ENCODE measurements at regions of chr13 and their contacts with region 1.

Region 1: DNA sequence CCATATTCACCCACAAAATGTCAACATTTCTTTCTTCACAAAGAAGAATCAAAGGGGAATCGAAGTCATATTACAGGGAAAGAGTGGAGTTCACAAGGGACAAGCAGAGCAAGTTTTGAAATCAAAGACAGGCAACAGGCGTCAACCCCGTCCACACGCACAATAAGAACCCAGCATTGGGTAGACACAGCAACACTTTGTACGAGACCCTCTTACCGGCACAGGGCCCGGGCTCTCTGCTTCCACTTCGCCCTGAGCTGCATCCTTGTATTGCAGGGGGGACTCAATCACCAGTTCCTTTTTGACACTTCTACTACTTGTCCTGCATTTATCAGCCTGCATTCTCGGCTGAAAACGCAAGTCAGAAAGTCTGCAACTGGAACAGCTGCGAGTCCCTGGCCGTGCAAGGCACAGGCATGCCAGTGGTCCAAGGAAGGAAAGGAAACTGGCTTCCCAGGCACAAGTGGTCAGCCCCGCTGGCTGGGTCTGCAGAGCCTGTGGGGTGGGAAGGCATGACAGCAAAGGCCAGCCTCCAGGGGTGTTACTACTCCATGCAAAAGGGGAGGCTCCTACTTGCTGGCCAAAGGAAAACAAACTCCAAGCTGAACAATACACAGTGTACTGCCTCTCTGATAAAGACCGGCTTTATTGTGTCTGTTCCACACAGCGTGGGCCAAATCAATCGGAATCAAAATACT is at the start of gene DOCK9:
- DNase-seq: peak; percentile 74 to 81 (median 78)
- ATAC-seq: peak; percentile 93 to 98 (median 96)
- H3K4me3 ChIP-seq: peak within 1 kb of the TSS; percentile 18 to 76 (median 57)
- H3K27ac ChIP-seq: peak within 1 kb of the TSS; percentile 50 to 84 (median 74)
- H3K4me1 ChIP-seq: peaks cover 0 to 71% (median 27%) of the 10 kb centered on the region in 12 donors
- H3K27me3 ChIP-seq: peaks cover 0 to 13% (median 0%) of the 10 kb centered on the region in 9 donors
- CTCF ChIP-seq: no peak
- POLR2A ChIP-seq: peak in 1 of 2 donors; percentile 84
- total RNA-seq, gene DOCK9: 35.0 to 128 (median 45.2) TPM

Region 2: DNA sequence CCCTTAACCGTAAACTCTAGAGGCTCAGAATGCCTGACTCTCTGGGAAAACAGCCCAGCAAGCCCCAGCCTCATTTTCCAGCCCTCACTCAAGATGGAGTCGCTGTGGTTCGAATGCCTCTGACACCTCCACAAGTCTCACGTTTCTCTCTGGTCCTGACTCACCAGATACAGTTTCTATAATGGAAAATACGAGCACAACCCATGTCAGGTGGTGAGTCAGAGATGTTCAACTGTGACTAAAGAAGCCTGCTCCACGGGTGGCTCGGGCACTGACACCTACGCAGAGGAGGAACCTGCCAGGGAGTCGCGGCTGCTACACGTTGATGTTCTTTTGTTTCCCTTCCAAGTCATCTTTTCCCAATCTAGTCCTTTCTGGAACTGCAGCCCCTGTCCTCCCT is 313.7 kb before region 1 on chr13:
- intact Hi-C with region 1: no loop called
- DNase-seq: no peak
- ATAC-seq: no peak
- H3K4me3 ChIP-seq: no peak overlapping the region
- H3K27ac ChIP-seq: no peak overlapping the region
- H3K4me1 ChIP-seq: no peaks in the 10 kb centered on the region
- H3K27me3 ChIP-seq: no peaks in the 10 kb centered on the region
- CTCF ChIP-seq: no peak
- POLR2A ChIP-seq: no peak

Region 3: DNA sequence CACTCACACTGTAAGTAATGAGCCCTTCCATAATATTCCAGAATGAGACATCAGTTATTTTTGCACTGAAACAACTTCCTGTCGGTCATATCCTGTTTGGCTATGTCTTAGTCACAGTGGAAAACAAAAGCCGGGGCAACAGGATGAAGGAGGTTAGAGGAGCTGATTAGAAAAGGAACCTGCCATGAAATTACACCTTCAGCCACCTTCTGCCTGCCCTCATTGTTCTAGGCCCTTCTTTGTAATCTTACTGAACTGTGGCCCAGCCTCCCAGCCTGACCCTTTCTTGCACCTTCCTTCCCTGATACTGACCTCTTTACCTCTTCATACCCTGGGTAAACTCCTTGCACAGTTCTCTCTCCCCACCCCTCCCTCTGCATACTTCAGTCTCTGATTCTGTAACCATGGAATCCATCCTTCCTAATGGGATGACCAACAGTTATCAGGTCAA is 67.2 kb before region 1 on chr13:
- intact Hi-C with region 1: loop called in 4 of 10 experiments (anchors 5 to 10 kb)
- DNase-seq: peak in 3 of 5 donors; percentile 44 to 58 (median 53)
- ATAC-seq: peak; percentile 81 to 94 (median 84)
- H3K4me3 ChIP-seq: no peak overlapping the region
- H3K27ac ChIP-seq: peak overlapping the region; percentile 18 to 90 (median 66)
- H3K4me1 ChIP-seq: peaks cover 2 to 50% (median 27%) of the 10 kb centered on the region in 12 donors
- H3K27me3 ChIP-seq: no peaks in the 10 kb centered on the region
- CTCF ChIP-seq: no peak
- POLR2A ChIP-seq: no peak

Region 4: GRCh38 chr13:98918771-98919170 is 58.9 kb before region 1 on chr13:
- intact Hi-C with region 1: loop called in 5 of 10 experiments (anchors 5 to 10 kb)
- DNase-seq: no peak
- ATAC-seq: peak in 1 of 4 donors; percentile 59
- H3K4me3 ChIP-seq: no peak overlapping the region
- H3K27ac ChIP-seq: peak overlapping the region in 3 of 12 donors; percentile 12 to 34 (median 29)
- H3K4me1 ChIP-seq: peaks cover 0 to 73% (median 38%) of the 10 kb centered on the region in 12 donors
- H3K27me3 ChIP-seq: no peaks in the 10 kb centered on the region
- CTCF ChIP-seq: no peak
- POLR2A ChIP-seq: no peak

Region 5: GRCh38 chr13:98927951-98928927 is 49.5 kb before region 1 on chr13:
- intact Hi-C with region 1: loop called in 1 of 10 experiments (anchors 5 kb)
- DNase-seq: peak in 2 of 5 donors; percentile 60 to 68
- ATAC-seq: peak; percentile 84 to 95 (median 94)
- H3K4me3 ChIP-seq: no peak overlapping the region
- H3K27ac ChIP-seq: peak overlapping the region; percentile 14 to 81 (median 64)
- H3K4me1 ChIP-seq: peaks cover 0 to 51% (median 31%) of the 10 kb centered on the region in 12 donors
- H3K27me3 ChIP-seq: no peaks in the 10 kb centered on the region
- CTCF ChIP-seq: no peak
- POLR2A ChIP-seq: no peak

Region 6: DNA sequence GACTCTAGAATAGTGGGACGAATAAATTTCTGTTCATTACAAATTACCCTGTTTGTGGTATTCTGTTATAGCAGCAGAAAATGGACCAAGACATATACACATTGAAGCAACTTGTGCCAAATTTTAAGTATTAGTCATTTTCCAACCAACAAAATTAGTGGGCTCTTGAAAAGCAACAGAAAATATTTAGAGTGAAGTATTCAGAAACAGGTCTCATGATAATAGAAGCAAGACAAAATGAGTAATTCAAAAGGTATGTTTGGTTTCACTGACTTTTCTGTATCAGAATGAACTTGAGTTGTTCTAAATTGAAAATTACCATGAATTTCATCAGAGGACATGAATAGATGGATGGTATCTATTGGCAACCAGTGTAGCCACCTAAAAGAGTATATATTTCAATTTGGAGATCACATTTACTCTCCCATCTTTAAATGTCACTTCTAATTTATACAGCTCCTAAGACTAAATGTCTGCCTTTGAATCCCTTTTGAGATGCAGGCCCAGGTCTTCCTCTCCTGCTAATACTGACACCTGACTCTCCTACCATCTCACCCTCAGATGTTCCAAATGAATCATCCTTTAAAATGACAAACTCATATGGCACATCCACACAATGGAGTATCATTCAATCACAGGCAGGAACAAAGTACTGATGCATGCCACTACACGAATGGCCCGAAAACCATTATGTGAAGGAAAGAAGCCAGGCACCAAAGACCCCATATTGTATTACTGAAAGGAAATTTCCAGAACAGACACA is 40.9 kb after region 1 on chr13:
- intact Hi-C with region 1: no loop called
- DNase-seq: no peak
- ATAC-seq: no peak
- H3K4me3 ChIP-seq: no peak overlapping the region
- H3K27ac ChIP-seq: no peak overlapping the region
- H3K4me1 ChIP-seq: peaks cover 0 to 36% (median 11%) of the 10 kb centered on the region in 12 donors
- H3K27me3 ChIP-seq: peaks cover 0 to 17% (median 0%) of the 10 kb centered on the region in 9 donors
- CTCF ChIP-seq: no peak
- POLR2A ChIP-seq: no peak

Measured in heart left ventricle (tissue), 16 donors.